Activated T-helper 2 cell treated with anti-CD3 and anti-CD28 coated beads, Interferon-gamma antibody, Interleukin-2, Interleukin-4, amounts not matched to agents 10 μg/mL and 5 μg/mL and 100 μg/mL, durations not matched to agents 14 hours and 24 hours and 36 hours (primary cell): ENCODE measurements at regions of chr20 and their contacts with region 1.

Region 1: DNA sequence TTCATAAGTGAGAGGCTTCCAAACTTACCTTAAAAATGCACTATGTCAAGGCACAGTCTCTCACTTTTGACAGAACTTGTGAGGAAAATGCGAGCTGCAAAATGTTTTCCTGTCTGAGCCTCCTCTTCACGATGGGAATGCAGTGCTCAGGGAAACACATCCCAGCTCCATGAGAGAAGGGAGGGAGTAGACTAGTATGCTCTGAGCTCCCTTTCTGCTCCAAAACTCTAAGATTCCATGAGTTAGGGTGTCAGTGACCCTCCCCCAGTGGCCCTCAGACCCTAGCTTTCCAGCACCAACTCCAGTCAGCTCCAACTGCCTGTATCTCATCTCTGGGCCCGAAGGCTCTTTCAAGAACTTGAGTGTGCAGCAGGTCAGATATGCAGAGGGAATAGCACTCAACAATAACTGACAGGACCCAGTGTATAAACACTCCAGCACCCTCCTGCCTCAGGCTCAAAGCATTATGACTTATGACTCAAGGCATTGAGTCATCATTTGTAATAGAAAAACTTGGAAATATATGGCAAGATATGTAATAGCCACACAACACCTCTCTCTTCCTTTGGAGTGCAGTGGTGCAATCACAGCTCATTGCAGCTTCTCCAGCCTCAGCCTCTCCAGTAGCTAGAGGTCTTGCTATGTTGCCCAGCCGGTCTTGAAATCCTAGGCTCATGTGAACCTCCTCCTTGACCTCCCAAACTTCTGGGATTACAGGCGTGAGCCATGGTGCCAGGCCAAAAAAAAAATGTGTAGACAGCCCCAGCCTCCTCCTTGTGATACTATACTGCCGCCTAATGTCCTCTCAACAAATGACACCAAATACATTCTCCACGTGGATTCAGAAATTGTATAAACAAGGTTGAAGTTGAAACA is 16.7 kb upstream of the ENTPD6 start:
- DNase-seq: no peak
- H3K4me3 Mint-ChIP-seq: no peak overlapping the region
- H3K27ac Mint-ChIP-seq: no peak overlapping the region
- H3K4me1 Mint-ChIP-seq: peaks cover 3% of the 10 kb centered on the region
- H3K27me3 Mint-ChIP-seq: peaks cover 12% of the 10 kb centered on the region

Region 2: GRCh38 chr20:24045621-24046318 is 1133.0 kb before region 1 on chr20:
- intact Hi-C with region 1: loop called (anchors 10 kb)
- DNase-seq: peak; percentile 26
- H3K4me3 Mint-ChIP-seq: no peak overlapping the region
- H3K27ac Mint-ChIP-seq: peak overlapping the region; percentile 57
- H3K4me1 Mint-ChIP-seq: peaks cover 57% of the 10 kb centered on the region
- H3K27me3 Mint-ChIP-seq: no peaks in the 10 kb centered on the region

Region 3: GRCh38 chr20:25083773-25084625 is 94.8 kb before region 1 on chr20:
- intact Hi-C with region 1: loop called (anchors 1 kb)
- DNase-seq: no peak
- H3K4me3 Mint-ChIP-seq: peak overlapping the region; percentile 23
- H3K27ac Mint-ChIP-seq: no peak overlapping the region
- H3K4me1 Mint-ChIP-seq: peaks cover 6% of the 10 kb centered on the region
- H3K27me3 Mint-ChIP-seq: peaks cover 69% of the 10 kb centered on the region

Region 4: GRCh38 chr20:26135325-26136110 is 956.7 kb after region 1 on chr20:
- intact Hi-C with region 1: no loop called
- DNase-seq: no peak
- H3K4me3 Mint-ChIP-seq: no peak overlapping the region
- H3K27ac Mint-ChIP-seq: no peak overlapping the region
- H3K4me1 Mint-ChIP-seq: no peaks in the 10 kb centered on the region
- H3K27me3 Mint-ChIP-seq: no peaks in the 10 kb centered on the region